PC-9 (cell line): ENCODE measurements at regions of chr12 and their contacts with region 1.

Region 1: DNA sequence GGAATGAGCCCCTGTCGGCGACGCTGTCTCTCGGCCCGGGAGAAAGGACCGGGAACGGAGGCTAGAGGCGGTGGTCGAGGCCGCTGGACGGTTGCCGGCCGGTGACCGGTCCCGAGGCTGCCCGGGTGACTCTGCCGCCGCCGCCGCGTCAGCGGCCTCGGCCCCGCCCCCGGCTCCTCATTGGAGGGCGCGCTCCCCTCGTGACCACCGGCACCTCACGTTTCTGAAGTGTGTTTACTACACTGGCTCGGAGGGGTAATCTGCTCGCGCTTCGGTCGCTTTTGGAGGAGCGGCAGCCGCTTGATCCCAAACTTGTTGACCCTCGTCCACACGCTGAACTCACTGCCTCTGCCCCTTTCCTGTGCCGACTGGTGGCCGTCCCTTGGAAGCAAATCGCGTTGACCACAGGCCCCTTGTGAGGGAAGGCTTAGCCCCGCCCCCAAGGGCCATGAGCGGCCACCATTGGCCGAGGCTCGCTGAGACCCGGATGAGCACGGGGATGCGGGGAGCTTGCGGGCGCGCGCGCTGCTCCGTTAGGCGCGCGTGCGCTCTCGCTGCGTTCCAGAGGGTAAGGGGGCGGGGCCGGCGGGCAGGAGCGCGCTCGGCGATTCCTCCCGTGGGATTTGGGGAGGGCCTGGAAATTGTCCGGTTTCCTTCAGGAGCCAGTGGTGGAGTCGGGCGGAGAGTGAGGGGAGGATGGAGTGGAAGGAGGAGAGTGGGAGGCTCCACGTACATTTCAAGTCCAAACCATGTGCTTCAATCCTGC is at the start of gene CRY1:
- DNase-seq: peak; percentile 81 to 95
- H3K4me3 ChIP-seq: peak within 1 kb of the TSS; percentile 64
- H3K27ac ChIP-seq: peak within 1 kb of the TSS; percentile 72
- H3K4me1 ChIP-seq: peaks cover 19% of the 10 kb centered on the region
- H3K27me3 ChIP-seq: no peaks in the 10 kb centered on the region
- CTCF ChIP-seq: no peak
- total RNA-seq, gene CRY1: 15.7 and 18.1 TPM in 2 replicates

Region 2: DNA sequence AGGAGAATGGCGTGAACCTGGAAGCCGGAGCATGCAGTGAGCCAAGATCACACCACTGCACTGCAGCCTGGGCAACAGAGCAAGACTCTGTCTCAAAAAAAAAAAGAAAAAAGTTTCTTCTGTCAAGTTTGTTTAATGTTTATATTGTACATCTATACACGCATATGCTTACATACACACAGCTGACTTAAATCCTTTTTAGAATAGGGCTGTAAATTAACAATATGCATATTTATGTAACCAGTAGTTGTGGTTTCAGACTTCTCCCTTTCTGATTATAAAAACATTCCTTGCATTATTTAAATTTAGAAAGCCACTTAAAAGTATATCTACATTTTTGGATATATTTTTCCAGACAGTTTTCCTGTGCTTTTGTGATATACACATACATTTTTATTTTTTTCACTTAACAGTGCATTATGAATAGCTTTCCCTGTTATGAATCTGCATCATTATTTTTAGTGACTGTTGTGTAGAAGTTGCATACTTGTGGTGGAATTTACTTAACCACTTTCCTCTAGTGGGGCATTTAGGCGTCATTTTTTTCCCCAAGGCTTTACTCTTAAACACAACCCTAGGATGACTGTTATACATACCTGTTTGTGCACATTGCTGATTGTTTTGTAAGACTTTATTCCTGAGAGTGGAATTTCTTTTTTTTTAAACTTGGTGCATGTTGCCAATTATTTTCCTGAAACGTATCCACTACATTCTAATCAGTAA is 706.6 kb before region 1 on chr12:
- CTCF ChIA-PET with region 1: no interaction called
- POLR2A ChIA-PET with region 1: no interaction called
- intact Hi-C with region 1: loop called (anchors 10 kb)
- DNase-seq: peak in 1 of 2 experiments; percentile 57
- H3K4me3 ChIP-seq: no peak overlapping the region
- H3K27ac ChIP-seq: no peak overlapping the region
- H3K4me1 ChIP-seq: no peaks in the 10 kb centered on the region
- H3K27me3 ChIP-seq: no peaks in the 10 kb centered on the region
- CTCF ChIP-seq: no peak

Region 3: DNA sequence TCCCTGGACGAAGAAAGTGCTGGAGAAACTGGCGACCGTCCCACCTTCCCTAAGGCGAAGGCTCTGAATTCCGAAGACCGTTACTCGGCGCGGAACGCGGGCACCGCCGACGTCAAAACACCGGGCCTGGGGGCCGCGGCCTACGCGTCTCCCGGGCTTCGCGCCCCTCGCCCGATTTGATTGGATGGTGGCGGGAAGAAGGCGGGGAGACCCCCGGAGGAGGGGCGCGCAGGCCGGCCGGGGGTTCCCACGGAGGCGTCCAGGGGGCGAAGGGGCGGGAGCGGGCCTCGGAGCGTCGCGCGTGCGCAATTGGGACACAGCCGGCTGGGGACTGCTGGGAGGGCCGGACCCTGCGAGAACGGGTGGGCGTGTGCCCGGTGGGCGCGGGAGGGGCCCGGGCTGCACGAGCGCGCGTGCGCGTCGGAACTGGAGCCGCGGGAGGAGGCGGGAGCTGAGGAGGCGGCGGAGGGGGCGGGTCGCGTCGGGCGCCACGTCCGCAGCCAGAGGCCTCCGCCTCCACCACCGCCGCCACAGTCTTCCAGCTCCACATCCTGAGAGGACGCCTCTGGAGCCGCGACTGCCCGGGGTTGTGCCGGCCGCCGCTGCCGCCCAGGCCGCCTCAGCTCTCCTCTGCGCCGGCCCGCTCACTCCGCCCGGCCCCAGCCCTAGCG is 138.1 kb before region 1 on chr12 and contains the start of gene TMEM263:
- CTCF ChIA-PET with region 1: no interaction called
- POLR2A ChIA-PET with region 1: no interaction called
- intact Hi-C with region 1: loop called (anchors 1 kb)
- DNase-seq: peak; percentile 59 to 91
- H3K4me3 ChIP-seq: peak within 1 kb of the TSS; percentile 83
- H3K27ac ChIP-seq: peak within 1 kb of the TSS; percentile 57
- H3K4me1 ChIP-seq: peaks cover 17% of the 10 kb centered on the region; the same call in 1 of the 2 replicates
- H3K27me3 ChIP-seq: peaks cover 13% of the 10 kb centered on the region; the same call in 1 of the 2 replicates
- CTCF ChIP-seq: no peak
- total RNA-seq, gene TMEM263: 32.9 and 33.2 TPM in 2 replicates

Region 4: GRCh38 chr12:107014028-107014427 is 79.6 kb before region 1 on chr12:
- CTCF ChIA-PET with region 1: no interaction called
- POLR2A ChIA-PET with region 1: no interaction called
- intact Hi-C with region 1: loop called (anchors 1 kb)
- DNase-seq: peak; percentile 37 to 85
- H3K4me3 ChIP-seq: no peak overlapping the region
- H3K27ac ChIP-seq: no peak overlapping the region
- H3K4me1 ChIP-seq: no peaks in the 10 kb centered on the region
- H3K27me3 ChIP-seq: no peaks in the 10 kb centered on the region
- CTCF ChIP-seq: peak; percentile 66

Region 5: GRCh38 chr12:107079172-107080011 is 14.2 kb before region 1 on chr12:
- CTCF ChIA-PET with region 1: interaction called, 10 read pairs
- POLR2A ChIA-PET with region 1: no interaction called
- intact Hi-C with region 1: no loop called
- DNase-seq: peak in 1 of 2 experiments; percentile 52
- H3K4me3 ChIP-seq: no peak overlapping the region
- H3K27ac ChIP-seq: no peak overlapping the region
- H3K4me1 ChIP-seq: peaks cover 6% of the 10 kb centered on the region; the same call in 1 of the 2 replicates
- H3K27me3 ChIP-seq: no peaks in the 10 kb centered on the region
- CTCF ChIP-seq: peak; percentile 62

Region 6: DNA sequence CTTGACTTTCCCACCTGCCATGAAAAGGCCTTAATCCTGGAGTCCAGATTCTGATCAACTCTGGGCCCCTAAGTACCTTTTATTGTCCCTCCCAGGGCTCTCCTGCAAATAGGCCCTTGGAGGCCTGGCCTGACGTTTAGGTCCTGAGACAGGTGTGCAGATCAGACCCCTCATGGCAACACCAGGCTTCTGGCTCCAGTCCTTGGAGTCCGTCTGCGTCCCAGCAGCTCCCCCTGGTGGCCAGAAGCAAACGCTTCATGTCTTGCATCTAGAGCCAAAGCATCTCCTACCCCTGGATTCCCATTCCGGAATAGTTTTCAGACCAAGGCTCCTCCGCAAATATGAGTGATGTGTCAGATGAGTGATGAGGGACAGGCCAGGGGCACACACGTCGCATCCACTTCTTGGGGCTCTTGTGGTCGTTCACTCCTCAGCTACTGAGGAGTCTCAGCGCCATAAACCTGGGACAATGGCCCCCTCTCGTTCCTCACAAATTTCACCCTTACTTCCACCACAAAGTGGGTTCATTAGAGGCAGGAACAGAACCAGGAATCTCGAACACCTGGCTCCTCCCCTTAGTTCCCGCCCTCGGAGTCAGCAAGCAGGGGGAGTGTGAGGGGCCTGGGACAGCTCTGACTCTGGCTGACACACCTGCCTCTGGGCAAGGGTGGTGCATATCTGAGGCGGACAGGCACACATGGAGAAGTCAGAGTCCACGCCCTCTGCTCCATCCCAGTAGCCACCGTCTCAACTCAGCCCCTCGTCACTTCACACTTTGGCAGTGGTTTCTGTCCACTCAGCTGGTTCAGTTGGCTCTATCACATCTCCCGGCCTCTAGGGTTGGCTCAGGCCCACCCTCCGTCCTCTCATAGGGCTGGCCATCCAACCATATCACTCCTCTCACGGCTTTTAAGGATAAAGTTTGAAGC is 514.1 kb after region 1 on chr12:
- CTCF ChIA-PET with region 1: no interaction called
- POLR2A ChIA-PET with region 1: no interaction called
- intact Hi-C with region 1: loop called (anchors 1 kb)
- DNase-seq: peak; percentile 57 to 71
- H3K4me3 ChIP-seq: no peak overlapping the region
- H3K27ac ChIP-seq: no peak overlapping the region
- H3K4me1 ChIP-seq: no peaks in the 10 kb centered on the region
- H3K27me3 ChIP-seq: no peaks in the 10 kb centered on the region
- CTCF ChIP-seq: peak; percentile 96